ENCODE measurements at regions of chr7 and their contacts with region 1.

Region 1: GRCh38 chr7:23474094-23474828 is 4.0 kb upstream of the IGF2BP3 start:
- DNase-seq: peak; percentile 99
- H3K4me3 ChIP-seq: peak overlapping the region; percentile 85
- H3K27ac ChIP-seq: peak overlapping the region; percentile 90
- H3K4me1 ChIP-seq: peaks cover 28% of the 10 kb centered on the region
- CTCF ChIP-seq: no peak

Region 2: DNA sequence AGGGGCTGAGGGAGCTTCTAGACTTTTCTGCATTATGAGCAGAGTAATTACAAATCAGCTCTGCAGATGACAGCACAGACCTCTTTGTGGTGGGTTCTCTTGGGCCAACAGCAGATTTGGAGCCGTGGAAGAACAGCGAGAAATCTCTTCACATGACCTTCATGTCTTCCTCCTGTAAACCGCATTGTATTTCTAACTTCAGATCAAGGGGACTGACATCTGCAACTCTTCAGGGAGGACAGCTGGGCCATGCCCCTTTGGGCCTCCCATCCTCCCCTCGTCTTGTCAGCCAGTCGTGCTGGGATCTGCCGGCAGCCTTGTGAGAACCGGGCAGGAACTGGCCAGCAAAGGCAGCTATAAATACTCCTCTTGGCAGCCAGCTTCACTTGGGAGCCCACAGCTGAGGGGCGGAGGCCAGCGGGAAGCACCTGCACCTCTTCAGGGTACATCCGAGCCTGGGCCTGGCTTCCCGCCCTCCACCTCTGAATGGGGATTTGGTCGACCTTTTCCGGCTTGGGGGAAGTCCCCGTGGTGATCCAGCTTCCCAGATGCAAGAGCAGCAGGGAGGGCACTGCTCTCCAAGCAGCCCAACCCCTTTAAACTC is 1029.0 kb before region 1 on chr7:
- CTCF ChIA-PET with region 1: no interaction called
- POLR2A ChIA-PET with region 1: no interaction called
- intact Hi-C with region 1: loop called (anchors 2 kb)
- DNase-seq: peak; percentile 93
- H3K4me3 ChIP-seq: peak overlapping the region; percentile 51
- H3K27ac ChIP-seq: peak overlapping the region; percentile 98
- H3K4me1 ChIP-seq: peaks cover 87% of the 10 kb centered on the region
- CTCF ChIP-seq: no peak

Region 3: DNA sequence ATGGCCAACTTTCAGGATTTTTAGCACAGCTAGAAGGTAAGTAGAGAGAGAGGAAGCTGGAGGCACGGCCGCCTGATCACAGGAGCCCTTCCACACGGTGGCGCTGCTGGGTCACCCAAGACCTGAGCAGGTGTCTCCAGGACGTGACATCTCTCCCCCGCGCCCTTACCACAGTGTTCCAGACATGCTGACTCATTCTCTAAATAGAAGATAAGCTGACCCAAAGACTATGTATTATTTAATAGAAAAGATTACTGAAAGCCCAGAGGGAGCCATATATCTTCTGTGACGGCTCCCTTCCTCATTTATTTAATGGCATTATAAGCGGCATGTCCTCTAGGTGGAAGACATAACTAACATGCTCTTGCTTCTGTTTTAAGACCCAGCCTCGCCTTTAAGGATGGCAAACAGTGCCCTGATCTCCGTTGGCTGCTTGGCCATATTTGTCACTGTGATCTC is 201.1 kb before region 1 on chr7:
- CTCF ChIA-PET with region 1: interaction called, 3 read pairs
- POLR2A ChIA-PET with region 1: no interaction called
- intact Hi-C with region 1: loop called (anchors 5 kb)
- DNase-seq: peak; percentile 93
- H3K4me3 ChIP-seq: peak overlapping the region; percentile 57
- H3K27ac ChIP-seq: peak overlapping the region; percentile 7
- H3K4me1 ChIP-seq: peaks cover 15% of the 10 kb centered on the region
- CTCF ChIP-seq: peak; percentile 95

Region 4: GRCh38 chr7:23373151-23374004 is 100.9 kb before region 1 on chr7:
- CTCF ChIA-PET with region 1: no interaction called
- POLR2A ChIA-PET with region 1: interaction called, 9 read pairs
- intact Hi-C with region 1: loop called (anchors 1 kb)
- DNase-seq: peak; percentile 92
- H3K4me3 ChIP-seq: peak overlapping the region; percentile 51
- H3K27ac ChIP-seq: peak overlapping the region; percentile 94
- H3K4me1 ChIP-seq: peaks cover 75% of the 10 kb centered on the region
- CTCF ChIP-seq: no peak

Region 5: DNA sequence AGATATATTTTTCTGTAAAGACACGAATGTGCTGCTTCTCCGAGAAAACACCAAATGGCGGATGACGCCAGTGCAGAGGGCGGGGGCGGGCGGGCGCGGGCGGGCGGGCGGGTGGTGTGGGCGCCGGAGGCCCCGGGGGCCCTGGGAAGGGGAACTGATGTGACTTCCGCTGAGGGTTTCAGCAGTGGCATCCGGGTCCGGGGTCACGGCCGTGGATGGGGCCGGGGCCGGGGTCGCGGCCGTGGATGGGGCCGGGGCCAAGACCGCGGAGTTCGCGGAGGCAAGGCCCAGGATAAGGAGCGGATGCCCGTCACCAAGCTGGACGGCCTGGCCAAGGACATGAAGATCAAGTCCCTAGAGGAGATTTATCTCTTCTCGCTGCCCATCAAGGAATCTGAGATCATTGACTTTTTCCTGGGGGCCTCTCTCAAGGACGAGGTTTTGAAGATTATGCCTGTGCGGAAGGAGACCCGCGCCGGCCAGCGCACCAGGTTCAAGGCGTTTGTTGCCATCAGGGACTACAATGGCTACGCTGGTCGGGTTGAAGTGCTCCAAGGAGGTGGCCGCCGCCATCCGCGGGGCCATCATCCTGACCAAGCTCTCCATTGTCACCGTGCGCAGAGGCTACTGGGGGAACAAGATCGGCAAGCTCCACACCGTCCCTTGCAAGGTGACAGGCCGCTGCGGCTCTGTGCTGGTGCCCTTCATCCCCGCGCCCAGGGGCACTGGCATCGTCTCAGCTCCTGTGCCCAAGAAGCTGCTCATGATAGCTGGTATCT is 16.3 kb after region 1 on chr7:
- CTCF ChIA-PET with region 1: no interaction called
- POLR2A ChIA-PET with region 1: interaction called, 27 read pairs
- intact Hi-C with region 1: loop called (anchors 2 kb)
- DNase-seq: peak; percentile 85
- H3K4me3 ChIP-seq: peak overlapping the region; percentile 92
- H3K27ac ChIP-seq: peak overlapping the region; percentile 77
- H3K4me1 ChIP-seq: peaks cover 12% of the 10 kb centered on the region
- CTCF ChIP-seq: no peak

Region 6: GRCh38 chr7:23531794-23532489 is 57.7 kb after region 1 on chr7 and contains the start of gene TRA2A:
- CTCF ChIA-PET with region 1: no interaction called
- POLR2A ChIA-PET with region 1: interaction called, 10 read pairs
- intact Hi-C with region 1: loop called (anchors 1 kb)
- DNase-seq: peak; percentile 96
- H3K4me3 ChIP-seq: peak within 1 kb of the TSS; percentile 98
- H3K27ac ChIP-seq: peak within 1 kb of the TSS; percentile 94
- H3K4me1 ChIP-seq: peaks cover 45% of the 10 kb centered on the region
- CTCF ChIP-seq: 0 out of 2 replicates have a peak, but pooled peaks have one; percentile 14
- total RNA-seq, gene TRA2A: 41.4 and 44.9 TPM in 2 replicates

Measured in OCI-LY7 (cell line).